ENCODE measurements at regions of chr12 and their contacts with region 1.

Region 1: GRCh38 chr12:42144408-42145196 is at the start of gene GXYLT1:
- DNase-seq: peak; percentile 98
- total RNA-seq, gene GXYLT1: 9.4 to 13.7 TPM

Region 2: DNA sequence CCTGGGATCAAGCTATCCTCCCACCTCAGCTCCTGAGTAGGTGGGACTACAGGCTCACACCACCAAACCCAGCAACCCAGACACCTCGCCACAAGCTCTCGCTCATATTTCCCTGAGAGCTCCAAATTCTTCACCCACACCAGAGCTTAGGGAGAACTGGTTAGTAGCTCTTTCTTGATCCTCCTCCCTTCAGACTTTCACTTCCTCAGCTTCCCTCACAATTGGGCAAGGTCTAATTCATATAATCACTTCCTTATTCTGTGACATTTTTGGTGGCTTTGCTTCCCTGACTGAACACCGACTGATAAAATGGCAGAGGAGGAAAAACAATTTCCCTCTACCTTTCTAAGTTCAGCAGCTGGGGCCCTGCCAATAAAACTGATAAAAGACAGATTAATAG is 88.5 kb before region 1 on chr12:
- intact Hi-C with region 1: no loop called
- DNase-seq: no peak

Region 3: GRCh38 chr12:42237052-42237852 is 92.7 kb after region 1 on chr12:
- intact Hi-C with region 1: loop called in 1 of 2 experiments (anchors 10 kb)
- DNase-seq: peak; percentile 90

Region 4: DNA sequence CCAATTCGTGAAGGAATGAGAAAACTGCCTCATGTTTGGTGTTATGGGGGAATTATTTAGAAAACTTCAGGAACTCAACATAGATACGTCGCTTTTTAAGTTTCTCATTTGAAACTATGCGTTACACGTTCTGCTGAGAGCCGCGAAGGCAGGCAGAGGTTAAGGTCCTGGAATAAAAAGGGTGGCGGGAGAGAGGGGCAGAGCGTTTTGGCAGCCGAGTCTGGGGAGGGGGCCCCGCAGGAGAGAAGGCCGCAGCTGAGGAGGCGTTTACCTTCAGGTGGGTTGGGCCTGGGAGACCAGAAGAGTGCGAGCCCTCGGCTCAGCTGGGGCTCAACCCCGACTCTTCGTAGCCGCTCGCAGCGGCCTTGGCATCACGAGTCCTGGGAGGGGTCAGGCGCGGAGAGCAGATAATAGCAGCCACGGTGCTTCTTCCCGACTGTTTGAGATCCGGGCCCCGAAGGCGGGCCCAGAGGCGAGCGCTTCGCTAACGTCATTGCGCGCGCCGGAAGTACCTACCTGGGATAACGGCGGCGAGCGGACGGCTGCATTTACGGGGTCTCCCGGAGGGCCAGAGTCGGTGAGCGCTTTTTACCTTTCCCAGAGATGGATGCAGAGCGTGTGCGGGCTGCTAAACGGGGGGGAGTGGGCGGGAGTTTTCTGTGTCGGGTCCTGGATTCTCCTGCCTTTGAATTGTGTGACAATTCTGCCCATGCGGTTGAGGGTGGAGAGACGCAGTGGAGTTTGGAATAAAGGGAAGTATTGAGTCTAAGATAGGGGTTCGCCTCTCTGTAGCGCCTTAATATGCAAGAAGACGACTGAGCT is 181.3 kb after region 1 on chr12 and contains the starts of genes PPHLN1 and ZCRB1:
- intact Hi-C with region 1: loop called in 1 of 2 experiments (anchors 10 kb)
- DNase-seq: peak; percentile 95
- total RNA-seq, gene PPHLN1: 43.4 to 45.3 TPM
- total RNA-seq, gene ZCRB1: 42.7 to 45.8 TPM